Activated CD4-positive, alpha-beta T cell treated with anti-CD3 and anti-CD28 coated beads, Interleukin-2, amount 10 ng/mL, durations not matched to agents 7 days and 5 days (primary cell): ENCODE measurements at regions of chr3 and their contacts with region 1.

Region 1: GRCh38 chr3:133487920-133488540 is 85.5 kb upstream of the CDV3 start:
- DNase-seq: peak; percentile 53
- H3K4me3 Mint-ChIP-seq: no peak overlapping the region
- H3K27ac Mint-ChIP-seq: peak overlapping the region; percentile 69
- H3K4me1 Mint-ChIP-seq: peaks cover 46% of the 10 kb centered on the region
- H3K27me3 Mint-ChIP-seq: no peaks in the 10 kb centered on the region

Region 2: GRCh38 chr3:133475245-133476010 is 12.6 kb before region 1 on chr3:
- CTCF ChIA-PET with region 1: interaction called, 18 read pairs
- POLR2A ChIA-PET with region 1: interaction called, 3 read pairs
- DNase-seq: peak; percentile 58
- H3K4me3 Mint-ChIP-seq: no peak overlapping the region
- H3K27ac Mint-ChIP-seq: peak overlapping the region; percentile 83
- H3K4me1 Mint-ChIP-seq: peaks cover 57% of the 10 kb centered on the region
- H3K27me3 Mint-ChIP-seq: no peaks in the 10 kb centered on the region

Region 3: GRCh38 chr3:133540896-133541674 is 53.1 kb after region 1 on chr3:
- CTCF ChIA-PET with region 1: no interaction called
- POLR2A ChIA-PET with region 1: no interaction called
- DNase-seq: no peak
- H3K4me3 Mint-ChIP-seq: no peak overlapping the region
- H3K27ac Mint-ChIP-seq: no peak overlapping the region
- H3K4me1 Mint-ChIP-seq: no peaks in the 10 kb centered on the region
- H3K27me3 Mint-ChIP-seq: no peaks in the 10 kb centered on the region

Region 4: DNA sequence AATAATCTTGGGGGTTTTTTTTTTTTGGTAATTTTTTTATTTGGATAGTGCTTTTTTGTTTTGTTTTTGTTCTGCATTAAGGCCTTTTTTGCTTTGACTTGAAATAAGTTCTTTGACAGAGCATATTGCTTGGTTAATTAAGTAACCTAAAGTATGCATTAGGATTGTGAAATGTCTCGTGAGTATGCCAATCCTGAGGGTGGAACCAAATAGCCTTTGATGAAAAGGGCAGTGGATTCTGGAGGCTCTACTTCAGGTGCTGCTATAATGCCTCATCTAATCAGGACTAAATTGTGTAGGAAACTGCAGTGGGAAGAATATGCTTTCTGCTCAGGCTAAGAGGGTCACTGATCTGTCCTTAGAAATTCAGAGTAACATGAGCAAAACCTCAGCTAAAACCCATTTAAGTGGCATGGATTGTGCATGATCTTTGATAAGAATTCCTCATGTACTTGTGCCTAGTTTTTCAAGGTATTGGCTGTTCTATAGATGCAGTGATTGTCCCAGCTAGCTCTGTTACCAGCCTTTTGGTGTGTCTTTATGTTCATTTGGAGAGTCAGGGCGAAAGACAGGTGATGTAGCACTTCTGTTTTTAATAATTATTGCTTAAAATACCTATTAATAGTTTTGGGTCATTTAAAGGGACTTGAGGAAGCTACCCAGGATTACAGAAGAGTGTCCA is 100.9 kb after region 1 on chr3:
- CTCF ChIA-PET with region 1: no interaction called
- POLR2A ChIA-PET with region 1: no interaction called
- DNase-seq: no peak
- H3K4me3 Mint-ChIP-seq: no peak overlapping the region
- H3K27ac Mint-ChIP-seq: no peak overlapping the region
- H3K4me1 Mint-ChIP-seq: peaks cover 9% of the 10 kb centered on the region
- H3K27me3 Mint-ChIP-seq: no peaks in the 10 kb centered on the region

Region 5: GRCh38 chr3:133722935-133723334 is 234.9 kb after region 1 on chr3:
- CTCF ChIA-PET with region 1: no interaction called
- POLR2A ChIA-PET with region 1: no interaction called
- DNase-seq: no peak
- H3K4me3 Mint-ChIP-seq: no peak overlapping the region
- H3K27ac Mint-ChIP-seq: no peak overlapping the region
- H3K4me1 Mint-ChIP-seq: no peaks in the 10 kb centered on the region
- H3K27me3 Mint-ChIP-seq: peaks cover 11% of the 10 kb centered on the region